ENCODE measurements at regions of chr17 and their contacts with region 1.

Region 1: DNA sequence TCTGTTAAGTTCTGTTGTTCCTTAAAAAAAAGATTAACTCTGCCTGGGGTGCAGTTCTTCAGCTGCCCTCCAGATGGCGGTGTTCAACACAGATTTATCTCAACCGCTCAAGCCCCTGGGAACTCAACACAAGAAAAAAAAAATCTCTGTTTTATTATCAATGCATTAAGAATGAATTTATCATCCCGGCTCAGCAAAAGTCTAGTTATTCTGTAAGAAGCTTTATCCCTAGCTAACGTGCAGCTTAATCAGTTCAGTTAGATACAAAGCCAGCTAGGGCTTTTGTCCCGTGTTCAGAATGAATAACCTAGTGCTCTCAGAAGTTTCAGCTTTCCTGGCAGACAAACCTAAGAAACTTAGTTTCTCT is 475.9 kb upstream of the CCL2 start:
- DNase-seq: peak; percentile 50
- H3K4me3 ChIP-seq: no peak overlapping the region
- H3K27ac ChIP-seq: no peak overlapping the region
- H3K4me1 ChIP-seq: no peaks in the 10 kb centered on the region
- H3K27me3 ChIP-seq: no peaks in the 10 kb centered on the region
- CTCF ChIP-seq: peak; percentile 72

Region 2: DNA sequence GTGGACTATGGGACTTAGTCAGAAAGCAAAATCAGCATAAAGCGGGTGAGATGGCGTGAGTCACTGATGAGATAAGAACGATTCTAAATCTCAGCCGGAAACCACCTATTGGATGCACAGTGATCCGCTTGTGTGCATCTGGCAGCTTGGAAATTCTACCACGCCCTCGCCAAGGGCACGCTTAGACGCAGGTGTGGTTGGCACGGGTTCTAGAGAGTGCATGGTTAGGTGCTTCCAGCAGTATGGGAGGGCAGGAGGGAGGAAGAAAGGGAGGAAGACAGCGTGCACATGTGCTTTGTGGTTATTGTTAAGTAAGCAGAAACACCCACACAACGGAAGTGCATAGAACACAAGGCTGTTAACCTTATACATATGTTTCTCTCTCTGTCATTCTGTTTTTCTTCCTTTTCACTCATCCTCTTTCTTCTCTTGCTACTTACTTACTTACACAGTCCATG is 112.1 kb before region 1 on chr17:
- CTCF ChIA-PET with region 1: no interaction called
- POLR2A ChIA-PET with region 1: no interaction called
- intact Hi-C with region 1: no loop called
- DNase-seq: no peak
- H3K4me3 ChIP-seq: no peak overlapping the region
- H3K27ac ChIP-seq: no peak overlapping the region
- H3K4me1 ChIP-seq: no peaks in the 10 kb centered on the region
- H3K27me3 ChIP-seq: no peaks in the 10 kb centered on the region
- CTCF ChIP-seq: no peak

Region 3: DNA sequence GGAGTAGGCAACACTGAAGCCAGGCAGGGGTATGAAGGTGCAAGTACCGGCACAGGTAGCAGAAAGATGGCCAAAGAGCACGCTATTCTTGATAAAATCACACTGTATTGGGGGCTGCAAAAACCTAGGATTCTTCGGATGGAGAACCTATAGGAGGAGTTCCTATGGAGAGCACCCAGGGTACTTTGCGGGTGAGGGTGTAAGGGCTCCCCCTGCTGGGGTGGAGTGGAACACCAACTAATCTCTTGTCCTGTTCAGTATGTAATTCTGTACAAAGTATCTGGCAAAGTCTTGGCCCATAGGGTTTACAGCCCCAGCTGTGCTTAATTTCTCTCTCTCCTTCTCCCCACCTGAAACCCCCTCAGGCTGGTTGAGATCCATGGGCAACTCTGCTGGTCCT is 93.0 kb before region 1 on chr17:
- CTCF ChIA-PET with region 1: no interaction called
- POLR2A ChIA-PET with region 1: no interaction called
- intact Hi-C with region 1: no loop called
- DNase-seq: peak; percentile 23
- H3K4me3 ChIP-seq: no peak overlapping the region
- H3K27ac ChIP-seq: no peak overlapping the region
- H3K4me1 ChIP-seq: no peaks in the 10 kb centered on the region
- H3K27me3 ChIP-seq: no peaks in the 10 kb centered on the region
- CTCF ChIP-seq: peak; percentile 53

Region 4: DNA sequence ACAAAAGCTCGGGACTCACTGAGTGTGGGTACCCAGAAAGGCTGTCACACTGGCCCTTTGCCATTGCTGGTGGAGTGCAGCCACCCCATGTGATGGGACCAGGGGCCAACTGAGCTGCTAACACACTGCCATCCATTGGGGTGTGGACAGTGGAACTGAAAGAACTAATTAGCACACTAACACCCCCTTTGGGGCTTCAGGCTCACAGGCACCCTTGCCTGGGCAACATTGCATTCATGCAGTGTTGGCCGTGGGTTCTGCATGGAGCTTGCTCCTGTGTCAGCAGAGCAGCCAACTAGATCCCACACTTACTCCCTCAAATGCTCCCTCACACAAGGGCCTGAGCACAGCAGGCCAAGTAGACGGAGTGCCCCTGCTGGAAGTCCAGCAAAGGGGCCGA is 10.1 kb before region 1 on chr17:
- CTCF ChIA-PET with region 1: no interaction called
- POLR2A ChIA-PET with region 1: interaction called, 10 read pairs
- intact Hi-C with region 1: no loop called
- DNase-seq: no peak
- H3K4me3 ChIP-seq: no peak overlapping the region
- H3K27ac ChIP-seq: no peak overlapping the region
- H3K4me1 ChIP-seq: no peaks in the 10 kb centered on the region
- H3K27me3 ChIP-seq: no peaks in the 10 kb centered on the region
- CTCF ChIP-seq: no peak

Region 5: DNA sequence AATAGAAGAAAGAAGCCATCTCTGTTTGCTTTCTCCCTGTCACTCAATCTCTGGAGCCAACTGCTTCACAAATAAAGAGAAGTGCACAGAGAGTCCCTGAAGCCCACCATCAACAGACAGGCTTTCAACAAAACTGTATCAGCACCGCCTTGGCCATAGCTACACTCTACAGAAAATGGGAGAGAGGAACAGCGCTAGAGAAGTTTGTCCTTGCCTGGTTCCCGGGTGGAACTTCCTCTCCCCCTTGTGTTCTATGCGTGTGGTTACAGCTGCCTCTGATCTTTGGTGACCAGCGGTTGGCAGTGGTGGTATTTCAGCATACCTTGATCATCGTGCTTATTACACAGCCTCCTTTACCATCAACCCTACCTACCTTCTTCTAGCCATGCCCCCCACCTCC is 384.4 kb after region 1 on chr17:
- CTCF ChIA-PET with region 1: no interaction called
- POLR2A ChIA-PET with region 1: no interaction called
- intact Hi-C with region 1: loop called (anchors 5 kb)
- DNase-seq: peak; percentile 1
- H3K4me3 ChIP-seq: no peak overlapping the region
- H3K27ac ChIP-seq: no peak overlapping the region
- H3K4me1 ChIP-seq: no peaks in the 10 kb centered on the region
- H3K27me3 ChIP-seq: peaks cover 2% of the 10 kb centered on the region
- CTCF ChIP-seq: 0 out of 2 replicates have a peak, but pooled peaks have one; percentile 16